CD4-positive, alpha-beta memory T cell (primary cell): ENCODE measurements at regions of chr4 and their contacts with region 1.

Region 1: GRCh38 chr4:142282870-142283431 is 563.1 kb downstream of the INPP4B start:
- DNase-seq: peak; percentile 16 to 47 (median 43)
- H3K4me3 ChIP-seq: no peak overlapping the region
- H3K4me3 Mint-ChIP-seq: no peak overlapping the region
- H3K27ac ChIP-seq: no peak overlapping the region
- H3K27ac Mint-ChIP-seq: no peak overlapping the region
- H3K4me1 ChIP-seq: peaks cover 63% of the 10 kb centered on the region
- H3K4me1 Mint-ChIP-seq: peaks cover 16 to 23% (median 20%) of the 10 kb centered on the region in 4 donors
- H3K27me3 ChIP-seq: no peaks in the 10 kb centered on the region
- H3K27me3 Mint-ChIP-seq: no peaks in the 10 kb centered on the region

Region 2: DNA sequence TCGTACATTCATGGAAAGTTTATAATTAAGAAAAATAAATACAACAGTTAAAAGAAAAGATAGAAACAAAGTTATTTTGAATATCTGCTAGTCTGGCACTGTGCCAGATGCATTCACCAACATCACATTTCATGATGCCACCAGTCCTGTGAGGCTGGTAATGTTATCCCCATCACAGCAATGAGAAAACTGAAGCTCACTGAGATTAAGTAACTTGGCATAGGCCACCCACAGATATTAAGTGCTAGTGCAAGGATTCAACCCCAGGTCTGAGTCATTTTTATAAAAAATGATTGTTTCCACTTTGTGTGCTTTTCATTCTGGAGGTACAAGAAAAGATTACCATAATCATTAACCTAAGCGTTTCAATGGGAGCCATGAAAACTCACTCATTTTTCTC is 711.6 kb before region 1 on chr4:
- CTCF ChIA-PET with region 1: no interaction called
- POLR2A ChIA-PET with region 1: no interaction called
- intact Hi-C with region 1: no loop called
- DNase-seq: no peak
- H3K4me3 ChIP-seq: no peak overlapping the region
- H3K4me3 Mint-ChIP-seq: no peak overlapping the region
- H3K27ac ChIP-seq: no peak overlapping the region
- H3K27ac Mint-ChIP-seq: no peak overlapping the region
- H3K4me1 ChIP-seq: no peaks in the 10 kb centered on the region
- H3K4me1 Mint-ChIP-seq: no peaks in the 10 kb centered on the region
- H3K27me3 ChIP-seq: no peaks in the 10 kb centered on the region
- H3K27me3 Mint-ChIP-seq: peaks cover 0 to 6% of the 10 kb centered on the region in 2 donors

Region 3: GRCh38 chr4:142126890-142127497 is 156.0 kb before region 1 on chr4:
- CTCF ChIA-PET with region 1: interaction called, 4 read pairs
- POLR2A ChIA-PET with region 1: no interaction called
- intact Hi-C with region 1: loop called (anchors 1 kb)
- DNase-seq: peak; percentile 61 to 67 (median 65)
- H3K4me3 ChIP-seq: no peak overlapping the region
- H3K4me3 Mint-ChIP-seq: no peak overlapping the region
- H3K27ac ChIP-seq: no peak overlapping the region
- H3K27ac Mint-ChIP-seq: peak overlapping the region in 3 of 7 donors; percentile 54 to 57 (median 54)
- H3K4me1 ChIP-seq: peaks cover 31% of the 10 kb centered on the region
- H3K4me1 Mint-ChIP-seq: peaks cover 19 to 33% (median 26%) of the 10 kb centered on the region in 4 donors
- H3K27me3 ChIP-seq: no peaks in the 10 kb centered on the region
- H3K27me3 Mint-ChIP-seq: no peaks in the 10 kb centered on the region

Region 4: DNA sequence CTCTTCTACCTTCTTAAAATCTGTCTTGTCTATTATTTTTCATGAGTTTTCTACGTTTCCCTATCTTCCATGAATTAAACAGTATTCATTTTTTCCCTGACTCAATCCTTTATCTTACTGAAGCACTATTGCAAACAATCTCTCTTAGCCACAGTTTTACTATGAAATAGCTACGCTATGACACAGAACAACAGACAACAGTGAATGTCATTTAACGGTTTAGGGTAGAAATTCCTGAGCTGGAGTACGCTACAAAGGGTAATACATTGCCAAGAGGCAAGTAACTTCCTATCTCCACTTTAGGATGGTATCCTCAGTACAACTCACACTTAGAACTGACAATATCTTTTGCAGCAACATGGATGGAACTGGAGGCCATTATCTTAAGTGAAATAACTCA is 10.6 kb after region 1 on chr4:
- CTCF ChIA-PET with region 1: interaction called, 38 read pairs
- POLR2A ChIA-PET with region 1: no interaction called
- intact Hi-C with region 1: no loop called
- DNase-seq: no peak
- H3K4me3 ChIP-seq: no peak overlapping the region
- H3K4me3 Mint-ChIP-seq: peak overlapping the region in 4 of 8 donors; percentile 3 to 50 (median 30)
- H3K27ac ChIP-seq: no peak overlapping the region
- H3K27ac Mint-ChIP-seq: peak overlapping the region in 5 of 7 donors; percentile 19 to 83 (median 51)
- H3K4me1 ChIP-seq: peaks cover 31% of the 10 kb centered on the region
- H3K4me1 Mint-ChIP-seq: peaks cover 37 to 67% (median 58%) of the 10 kb centered on the region in 4 donors
- H3K27me3 ChIP-seq: no peaks in the 10 kb centered on the region
- H3K27me3 Mint-ChIP-seq: no peaks in the 10 kb centered on the region

Region 5: GRCh38 chr4:142324572-142324971 is 41.6 kb after region 1 on chr4:
- CTCF ChIA-PET with region 1: interaction called, 16 read pairs
- POLR2A ChIA-PET with region 1: no interaction called
- intact Hi-C with region 1: no loop called
- DNase-seq: no peak
- H3K4me3 ChIP-seq: no peak overlapping the region
- H3K4me3 Mint-ChIP-seq: peak overlapping the region in 2 of 8 donors; percentile 13 to 37
- H3K27ac ChIP-seq: no peak overlapping the region
- H3K27ac Mint-ChIP-seq: peak overlapping the region; percentile 25 to 84 (median 47)
- H3K4me1 ChIP-seq: peaks cover 71% of the 10 kb centered on the region
- H3K4me1 Mint-ChIP-seq: peaks cover 59 to 81% (median 73%) of the 10 kb centered on the region in 4 donors
- H3K27me3 ChIP-seq: no peaks in the 10 kb centered on the region
- H3K27me3 Mint-ChIP-seq: no peaks in the 10 kb centered on the region

Region 6: DNA sequence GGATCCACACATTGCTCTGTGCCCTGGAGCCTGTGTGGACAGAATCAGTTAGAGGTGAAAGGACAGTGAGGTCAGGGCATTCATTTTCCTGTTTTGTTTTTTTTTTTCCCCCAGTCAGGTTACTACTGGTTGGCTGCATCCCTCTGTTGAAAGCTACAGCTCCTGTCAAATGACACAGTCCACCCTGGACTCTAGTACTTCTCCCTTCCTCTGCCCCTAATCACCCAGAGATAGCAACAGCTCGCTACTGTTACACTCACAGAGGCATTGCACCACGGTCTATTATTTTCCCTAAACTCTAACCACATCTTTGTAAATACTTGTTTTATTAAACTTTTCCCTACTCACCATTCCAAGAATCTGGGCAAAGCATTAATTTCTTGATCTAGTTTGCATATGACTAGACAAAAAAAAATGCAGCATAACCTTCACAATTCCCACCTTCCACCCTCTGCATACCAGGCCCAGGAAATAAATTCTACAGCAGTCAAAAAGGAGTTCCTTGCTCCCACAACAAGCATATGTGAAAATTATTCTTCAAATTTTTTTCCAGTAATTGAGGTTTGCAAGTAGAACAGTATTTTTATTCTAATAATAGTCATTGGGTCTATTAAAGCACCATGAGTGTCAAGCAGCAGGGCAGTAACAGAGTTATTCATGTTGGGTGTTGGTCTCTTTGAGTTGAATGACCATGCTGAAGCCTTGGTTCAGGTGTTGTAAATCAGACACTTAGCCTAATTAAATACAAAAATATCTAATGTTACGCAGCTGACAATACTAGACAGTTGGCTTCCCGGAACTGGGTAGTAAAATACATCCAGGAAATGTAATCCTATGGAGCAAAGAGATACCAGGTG is 233.9 kb after region 1 on chr4:
- CTCF ChIA-PET with region 1: no interaction called
- POLR2A ChIA-PET with region 1: no interaction called
- intact Hi-C with region 1: no loop called
- DNase-seq: no peak
- H3K4me3 ChIP-seq: no peak overlapping the region
- H3K4me3 Mint-ChIP-seq: no peak overlapping the region
- H3K27ac ChIP-seq: no peak overlapping the region
- H3K27ac Mint-ChIP-seq: peak overlapping the region in 1 of 7 donors; percentile 52
- H3K4me1 ChIP-seq: no peaks in the 10 kb centered on the region
- H3K4me1 Mint-ChIP-seq: peaks cover 0 to 2% (median 0%) of the 10 kb centered on the region in 4 donors
- H3K27me3 ChIP-seq: no peaks in the 10 kb centered on the region
- H3K27me3 Mint-ChIP-seq: no peaks in the 10 kb centered on the region

Region 7: DNA sequence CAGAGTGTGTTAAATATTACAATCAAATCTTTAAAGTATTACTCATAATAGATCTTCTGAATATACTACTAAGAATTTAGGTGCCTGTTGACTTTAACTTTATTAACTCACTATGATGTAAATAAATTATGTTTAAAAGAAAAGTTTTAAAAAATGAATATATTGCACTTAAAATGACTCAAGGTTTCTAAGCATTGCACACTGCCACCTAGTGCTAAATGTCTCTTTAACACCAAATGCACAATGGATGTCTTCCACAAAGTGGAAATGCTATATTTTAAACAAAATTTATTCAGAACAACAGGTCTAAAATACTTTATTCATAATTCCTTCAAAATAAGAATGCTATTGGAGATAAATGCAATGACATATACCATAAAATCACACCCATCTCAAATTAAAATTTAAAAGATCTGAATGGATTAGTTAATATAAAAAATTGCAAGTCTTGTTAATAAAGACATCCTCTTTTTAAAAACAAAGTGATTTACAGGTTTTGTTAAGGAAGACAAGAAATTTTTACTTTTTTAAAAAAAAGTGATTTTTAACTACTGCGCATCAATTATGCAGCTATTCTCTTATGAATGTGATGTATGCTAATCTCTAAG is 557.7 kb after region 1 on chr4:
- CTCF ChIA-PET with region 1: interaction called, 9 read pairs
- POLR2A ChIA-PET with region 1: no interaction called
- intact Hi-C with region 1: loop called (anchors 1 kb)
- DNase-seq: peak in 4 of 5 donors; percentile 26 to 42 (median 36)
- H3K4me3 ChIP-seq: no peak overlapping the region
- H3K4me3 Mint-ChIP-seq: no peak overlapping the region
- H3K27ac ChIP-seq: no peak overlapping the region
- H3K27ac Mint-ChIP-seq: no peak overlapping the region
- H3K4me1 ChIP-seq: peaks cover 12% of the 10 kb centered on the region
- H3K4me1 Mint-ChIP-seq: peaks cover 8 to 13% (median 11%) of the 10 kb centered on the region in 4 donors
- H3K27me3 ChIP-seq: no peaks in the 10 kb centered on the region
- H3K27me3 Mint-ChIP-seq: peaks cover 5 to 6% of the 10 kb centered on the region in 2 donors